Heart left ventricle (tissue), 16 donors: ENCODE measurements at regions of chr13 and their contacts with region 1.

Region 1: GRCh38 chr13:21458813-21459701 is at the start of gene ZDHHC20:
- DNase-seq: peak; percentile 91 to 97 (median 92)
- ATAC-seq: peak; percentile 88 to 99 (median 98)
- H3K4me3 ChIP-seq: peak within 1 kb of the TSS; percentile 71 to 99 (median 94)
- H3K27ac ChIP-seq: peak within 1 kb of the TSS; percentile 70 to 97 (median 94)
- H3K4me1 ChIP-seq: peaks cover 0 to 34% (median 13%) of the 10 kb centered on the region in 12 donors
- H3K27me3 ChIP-seq: no peaks in the 10 kb centered on the region
- CTCF ChIP-seq: no peak
- POLR2A ChIP-seq: peak in 1 of 2 donors; percentile 86
- total RNA-seq, gene ZDHHC20: 14.1 to 36.4 (median 17.1) TPM

Region 2: GRCh38 chr13:21297914-21298831 is 160.9 kb before region 1 on chr13:
- intact Hi-C with region 1: loop called in 2 of 10 experiments (anchors 1 to 5 kb)
- DNase-seq: peak; percentile 84 to 91 (median 88)
- ATAC-seq: peak; percentile 98 to 100 (median 100)
- H3K4me3 ChIP-seq: peak overlapping the region; percentile 75 to 100 (median 88)
- H3K27ac ChIP-seq: peak overlapping the region in 11 of 12 donors; percentile 10 to 79 (median 71)
- H3K4me1 ChIP-seq: peaks cover 0 to 24% (median 16%) of the 10 kb centered on the region in 12 donors
- H3K27me3 ChIP-seq: no peaks in the 10 kb centered on the region
- CTCF ChIP-seq: peak; percentile 75 to 99 (median 89)
- POLR2A ChIP-seq: peak in 1 of 2 donors; percentile 33

Region 3: GRCh38 chr13:21344662-21345176 is 114.3 kb before region 1 on chr13:
- intact Hi-C with region 1: loop called in 1 of 10 experiments (anchors 5 kb)
- DNase-seq: no peak
- ATAC-seq: peak in 1 of 4 donors; percentile 16
- H3K4me3 ChIP-seq: peak overlapping the region in 1 of 12 donors; percentile 30
- H3K27ac ChIP-seq: peak overlapping the region in 1 of 12 donors; percentile 55
- H3K4me1 ChIP-seq: peaks cover 0 to 18% (median 0%) of the 10 kb centered on the region in 12 donors
- H3K27me3 ChIP-seq: no peaks in the 10 kb centered on the region
- CTCF ChIP-seq: no peak
- POLR2A ChIP-seq: no peak

Region 4: DNA sequence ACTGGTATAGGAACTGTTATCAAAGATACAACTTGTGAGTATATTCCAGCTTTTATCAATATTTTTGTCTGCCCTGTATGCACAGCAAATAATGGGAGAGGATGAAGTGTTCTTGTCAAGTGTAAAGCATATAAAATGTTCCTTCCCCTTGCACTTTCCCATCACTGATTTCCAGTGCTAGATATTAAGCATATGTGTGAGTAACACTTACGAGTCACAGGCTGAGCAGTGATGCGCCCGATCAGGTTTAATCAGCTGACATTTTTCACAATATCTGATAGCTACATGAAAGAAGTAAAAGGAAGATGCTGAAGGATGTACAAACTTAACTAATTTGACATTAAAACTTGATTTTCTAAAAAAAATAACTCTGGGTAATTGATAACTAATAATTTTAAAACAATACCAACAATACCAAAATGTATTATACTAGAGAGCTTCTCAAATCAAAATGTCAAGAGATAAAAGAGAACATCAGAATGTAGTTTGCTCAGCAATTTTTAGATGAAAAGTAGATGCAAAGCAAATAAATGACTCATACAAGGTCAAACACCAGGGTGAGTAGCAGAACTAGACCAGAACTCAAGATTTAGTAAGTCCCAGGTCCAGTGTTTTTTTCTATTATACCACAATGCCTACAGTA is 56.4 kb before region 1 on chr13:
- intact Hi-C with region 1: loop called in 2 of 10 experiments (anchors 10 kb)
- DNase-seq: no peak
- ATAC-seq: no peak
- H3K4me3 ChIP-seq: no peak overlapping the region
- H3K27ac ChIP-seq: no peak overlapping the region
- H3K4me1 ChIP-seq: peaks cover 0 to 18% (median 0%) of the 10 kb centered on the region in 12 donors
- H3K27me3 ChIP-seq: no peaks in the 10 kb centered on the region
- CTCF ChIP-seq: no peak
- POLR2A ChIP-seq: no peak

Region 5: GRCh38 chr13:21435710-21436151 is 23.3 kb before region 1 on chr13:
- intact Hi-C with region 1: loop called in 1 of 10 experiments (anchors 2 kb)
- DNase-seq: peak; percentile 60 to 79 (median 69)
- ATAC-seq: peak; percentile 96 to 100 (median 100)
- H3K4me3 ChIP-seq: peak overlapping the region in 5 of 12 donors; percentile 6 to 30 (median 21)
- H3K27ac ChIP-seq: peak overlapping the region; percentile 49 to 92 (median 78)
- H3K4me1 ChIP-seq: peaks cover 0 to 55% (median 13%) of the 10 kb centered on the region in 12 donors
- H3K27me3 ChIP-seq: no peaks in the 10 kb centered on the region
- CTCF ChIP-seq: no peak
- POLR2A ChIP-seq: peak in 1 of 2 donors; percentile 16